B cell (primary cell): ENCODE measurements at regions of chr4 and their contacts with region 1.

Region 1: GRCh38 chr4:140851032-140851636 is 94.9 kb upstream of the TBC1D9 start:
- DNase-seq: peak; percentile 84
- ATAC-seq: peak; percentile 91
- H3K4me3 ChIP-seq: no peak overlapping the region
- H3K4me3 Mint-ChIP-seq: no peak overlapping the region
- H3K27ac ChIP-seq: peak overlapping the region in 1 of 2 donors; percentile 11
- H3K27ac Mint-ChIP-seq: peak overlapping the region; percentile 33
- H3K4me1 ChIP-seq: peaks cover 18 to 25% of the 10 kb centered on the region in 2 donors
- H3K4me1 Mint-ChIP-seq: peaks cover 26% of the 10 kb centered on the region
- H3K27me3 ChIP-seq: no peaks in the 10 kb centered on the region
- H3K27me3 Mint-ChIP-seq: no peaks in the 10 kb centered on the region
- CTCF ChIP-seq: peak; percentile 98

Region 2: DNA sequence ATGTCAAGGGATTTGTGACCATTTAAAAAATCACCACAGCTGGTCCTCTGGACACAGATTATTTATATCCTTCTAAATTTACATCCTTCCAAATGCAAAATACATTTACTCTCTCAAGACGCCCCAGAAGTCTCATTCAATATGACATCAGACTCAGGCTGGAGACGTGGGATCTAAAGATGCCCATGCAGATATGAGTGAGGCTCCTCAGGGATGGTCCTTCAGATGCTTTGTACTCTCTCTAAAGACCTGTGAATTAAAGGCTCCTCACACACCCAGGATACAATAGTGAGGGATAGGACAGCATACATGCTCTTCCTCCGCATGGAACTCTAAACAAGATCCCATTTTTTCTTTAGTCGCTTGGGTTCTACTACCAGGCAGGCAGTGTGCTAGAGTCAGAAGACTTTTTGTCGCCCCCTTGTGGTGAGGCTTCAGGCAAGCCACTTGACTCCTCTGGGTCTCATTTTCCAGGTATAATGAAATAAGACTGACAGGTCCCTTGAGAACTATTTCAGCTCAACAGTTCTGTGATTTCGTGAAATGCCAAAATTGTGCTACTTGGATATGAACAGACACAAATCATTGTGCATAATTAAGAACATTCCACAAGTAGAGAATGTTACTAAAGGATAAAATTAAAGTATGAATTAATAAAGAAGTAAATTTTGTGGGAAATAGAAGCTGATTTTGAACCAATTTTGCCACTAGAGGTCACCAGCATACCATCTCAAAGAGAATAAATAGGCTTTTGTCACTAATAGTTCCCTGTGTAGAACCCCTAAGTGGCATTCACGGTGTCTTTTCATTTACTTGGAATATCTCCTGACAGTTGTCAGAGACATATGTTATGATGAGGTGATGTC is 491.3 kb before region 1 on chr4:
- CTCF ChIA-PET with region 1: interaction called, 47 read pairs
- POLR2A ChIA-PET with region 1: no interaction called
- intact Hi-C with region 1: loop called (anchors 1 kb)
- DNase-seq: peak; percentile 84
- ATAC-seq: peak; percentile 90
- H3K4me3 ChIP-seq: no peak overlapping the region
- H3K4me3 Mint-ChIP-seq: no peak overlapping the region
- H3K27ac ChIP-seq: no peak overlapping the region
- H3K27ac Mint-ChIP-seq: no peak overlapping the region
- H3K4me1 ChIP-seq: peaks cover 0 to 3% of the 10 kb centered on the region in 2 donors
- H3K4me1 Mint-ChIP-seq: peaks cover 7% of the 10 kb centered on the region
- H3K27me3 ChIP-seq: peaks cover 0 to 2% (median 0%) of the 10 kb centered on the region in 4 experiments
- H3K27me3 Mint-ChIP-seq: peaks cover 12% of the 10 kb centered on the region
- CTCF ChIP-seq: peak; percentile 98

Region 3: GRCh38 chr4:140609548-140610425 is 241.3 kb before region 1 on chr4:
- CTCF ChIA-PET with region 1: interaction called, 6 read pairs
- POLR2A ChIA-PET with region 1: no interaction called
- intact Hi-C with region 1: loop called (anchors 2 kb)
- DNase-seq: peak; percentile 57
- ATAC-seq: peak; percentile 68
- H3K4me3 ChIP-seq: no peak overlapping the region
- H3K4me3 Mint-ChIP-seq: no peak overlapping the region
- H3K27ac ChIP-seq: no peak overlapping the region
- H3K27ac Mint-ChIP-seq: no peak overlapping the region
- H3K4me1 ChIP-seq: peaks cover 0 to 6% of the 10 kb centered on the region in 2 donors
- H3K4me1 Mint-ChIP-seq: peaks cover 7% of the 10 kb centered on the region
- H3K27me3 ChIP-seq: no peaks in the 10 kb centered on the region
- H3K27me3 Mint-ChIP-seq: peaks cover 15% of the 10 kb centered on the region
- CTCF ChIP-seq: peak; percentile 76

Region 4: GRCh38 chr4:140680686-140681085 is 170.4 kb before region 1 on chr4:
- CTCF ChIA-PET with region 1: interaction called, 6 read pairs
- POLR2A ChIA-PET with region 1: no interaction called
- intact Hi-C with region 1: loop called (anchors 5 kb)
- DNase-seq: no peak
- ATAC-seq: no peak
- H3K4me3 ChIP-seq: no peak overlapping the region
- H3K4me3 Mint-ChIP-seq: no peak overlapping the region
- H3K27ac ChIP-seq: no peak overlapping the region
- H3K27ac Mint-ChIP-seq: no peak overlapping the region
- H3K4me1 ChIP-seq: peaks cover 5% of the 10 kb centered on the region in 2 donors
- H3K4me1 Mint-ChIP-seq: peaks cover 13% of the 10 kb centered on the region
- H3K27me3 ChIP-seq: no peaks in the 10 kb centered on the region
- H3K27me3 Mint-ChIP-seq: no peaks in the 10 kb centered on the region
- CTCF ChIP-seq: no peak

Region 5: DNA sequence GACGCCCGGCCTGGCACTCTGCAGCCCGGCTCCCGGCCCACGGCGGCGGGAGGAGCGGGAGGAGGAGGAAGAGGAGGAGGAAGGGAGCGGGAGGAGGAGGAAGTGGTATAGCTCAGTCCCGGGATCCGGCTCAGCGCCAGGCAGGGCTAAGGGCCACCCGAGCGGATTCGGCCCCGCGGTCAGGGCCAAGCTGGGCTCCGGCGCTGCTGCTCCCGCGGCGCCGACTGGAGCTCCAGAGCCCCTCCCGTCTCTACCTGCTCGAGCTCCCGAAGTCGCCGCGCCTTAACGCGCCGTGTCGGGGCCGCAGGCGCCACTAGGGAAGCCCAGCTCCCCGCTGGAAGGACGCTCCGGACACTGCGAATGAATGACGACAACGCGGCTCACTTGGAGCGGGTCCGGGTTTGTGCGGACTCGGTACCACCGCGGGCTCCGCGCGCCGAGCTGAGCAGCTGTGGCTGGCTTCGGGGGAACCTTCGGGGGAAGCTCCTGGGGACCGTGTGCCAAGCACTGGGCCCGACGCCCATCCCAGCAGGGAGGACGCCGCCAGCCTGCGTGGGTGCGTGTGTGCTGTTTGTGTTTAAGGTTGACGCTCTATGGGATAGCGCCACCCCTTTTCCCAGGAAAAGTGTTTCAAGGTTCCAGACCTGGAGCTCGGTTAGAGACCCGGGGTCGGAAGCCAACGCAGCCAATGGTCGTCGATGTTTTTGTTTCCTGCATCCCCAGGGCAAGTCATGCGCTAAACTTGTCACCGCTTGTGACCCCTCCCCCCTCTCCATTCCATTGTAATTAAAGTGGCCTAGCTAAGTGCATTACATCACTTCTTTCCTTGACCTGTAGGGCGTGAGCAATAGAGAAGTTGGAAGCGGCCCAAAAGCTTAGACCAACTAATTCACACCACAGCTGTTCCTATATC is 94.6 kb before region 1 on chr4 and contains the start of gene TBC1D9:
- CTCF ChIA-PET with region 1: interaction called, 31 read pairs
- POLR2A ChIA-PET with region 1: interaction called, 4 read pairs
- intact Hi-C with region 1: loop called (anchors 1 kb)
- DNase-seq: peak; percentile 88
- ATAC-seq: peak; percentile 62
- H3K4me3 ChIP-seq: peak within 1 kb of the TSS; percentile 66 to 99 (median 87)
- H3K4me3 Mint-ChIP-seq: peak within 1 kb of the TSS; percentile 97
- H3K27ac ChIP-seq: peak within 1 kb of the TSS; percentile 99
- H3K27ac Mint-ChIP-seq: peak within 1 kb of the TSS; percentile 98
- H3K4me1 ChIP-seq: peaks cover 45 to 56% of the 10 kb centered on the region in 2 donors
- H3K4me1 Mint-ChIP-seq: peaks cover 63% of the 10 kb centered on the region
- H3K27me3 ChIP-seq: no peaks in the 10 kb centered on the region
- H3K27me3 Mint-ChIP-seq: no peaks in the 10 kb centered on the region
- CTCF ChIP-seq: peak; percentile 1
- total RNA-seq, gene TBC1D9: 235 and 252 TPM in 2 replicates

Region 6: GRCh38 chr4:140807491-140808252 is 43.5 kb before region 1 on chr4:
- CTCF ChIA-PET with region 1: interaction called, 18 read pairs
- POLR2A ChIA-PET with region 1: interaction called, 4 read pairs
- intact Hi-C with region 1: loop called (anchors 1 kb)
- DNase-seq: peak; percentile 80
- ATAC-seq: peak; percentile 84
- H3K4me3 ChIP-seq: peak overlapping the region in 2 of 5 experiments; percentile 10 to 50
- H3K4me3 Mint-ChIP-seq: peak overlapping the region; percentile 70
- H3K27ac ChIP-seq: peak overlapping the region; percentile 82 to 83
- H3K27ac Mint-ChIP-seq: peak overlapping the region; percentile 97
- H3K4me1 ChIP-seq: peaks cover 85 to 92% of the 10 kb centered on the region in 2 donors
- H3K4me1 Mint-ChIP-seq: peaks cover 83% of the 10 kb centered on the region
- H3K27me3 ChIP-seq: no peaks in the 10 kb centered on the region
- H3K27me3 Mint-ChIP-seq: no peaks in the 10 kb centered on the region
- CTCF ChIP-seq: no peak